Activated naive CD4-positive, alpha-beta T cell treated with anti-CD3 and anti-CD28 coated beads for 36 hours (primary cell): ENCODE measurements at regions of chr4 and their contacts with region 1.

Region 1: GRCh38 chr4:1752284-1753041 is 31.1 kb downstream of the TACC3 start:
- DNase-seq: peak; percentile 94
- H3K4me3 Mint-ChIP-seq: no peak overlapping the region
- H3K27ac Mint-ChIP-seq: no peak overlapping the region
- H3K4me1 Mint-ChIP-seq: peaks cover 6% of the 10 kb centered on the region
- H3K27me3 Mint-ChIP-seq: no peaks in the 10 kb centered on the region

Region 2: GRCh38 chr4:891747-892146 is 860.7 kb before region 1 on chr4:
- CTCF ChIA-PET with region 1: no interaction called
- intact Hi-C with region 1: no loop called
- DNase-seq: peak; percentile 29
- H3K4me3 Mint-ChIP-seq: no peak overlapping the region
- H3K27ac Mint-ChIP-seq: no peak overlapping the region
- H3K4me1 Mint-ChIP-seq: no peaks in the 10 kb centered on the region
- H3K27me3 Mint-ChIP-seq: no peaks in the 10 kb centered on the region

Region 3: DNA sequence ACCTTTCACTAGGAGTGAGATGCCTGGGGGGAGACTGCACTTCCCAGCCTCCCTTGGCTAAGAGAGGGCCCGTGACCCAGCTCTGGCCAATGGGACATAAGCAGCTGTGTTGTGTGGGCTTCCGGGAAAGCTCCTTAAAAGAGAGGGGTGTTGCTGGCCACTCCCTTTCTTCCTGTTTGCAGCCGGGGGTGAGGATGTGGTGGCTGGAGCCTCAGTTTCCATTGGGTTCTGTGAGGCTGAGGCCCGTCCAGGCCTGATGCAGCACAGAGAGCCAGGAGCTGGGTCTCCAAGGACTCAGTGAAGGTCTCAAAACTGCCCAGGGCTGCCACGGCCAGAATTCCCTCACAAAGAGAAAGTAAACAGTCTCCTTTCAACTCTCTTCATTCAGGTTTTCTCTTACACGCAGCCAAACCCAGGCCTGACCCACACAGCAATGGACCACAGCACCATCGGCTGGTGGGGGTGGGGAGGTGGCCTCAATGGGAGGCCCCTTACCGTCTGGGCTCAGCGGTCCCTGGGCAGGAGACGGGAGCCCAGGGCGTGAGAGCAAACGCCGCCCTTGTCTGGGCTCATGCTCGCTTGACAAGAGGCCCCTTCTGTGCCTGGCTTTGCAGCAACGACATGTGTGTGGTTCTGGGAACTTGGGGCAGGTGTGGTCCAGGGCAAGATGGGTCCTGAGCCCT is 352.8 kb before region 1 on chr4:
- CTCF ChIA-PET with region 1: no interaction called
- intact Hi-C with region 1: no loop called
- DNase-seq: no peak
- H3K4me3 Mint-ChIP-seq: no peak overlapping the region
- H3K27ac Mint-ChIP-seq: no peak overlapping the region
- H3K4me1 Mint-ChIP-seq: peaks cover 2% of the 10 kb centered on the region
- H3K27me3 Mint-ChIP-seq: peaks cover 20% of the 10 kb centered on the region

Region 4: GRCh38 chr4:1767770-1768366 is 15.4 kb after region 1 on chr4:
- CTCF ChIA-PET with region 1: interaction called, 11 read pairs
- intact Hi-C with region 1: loop called (anchors 1 kb)
- DNase-seq: peak; percentile 53
- H3K4me3 Mint-ChIP-seq: peak overlapping the region; percentile 24
- H3K27ac Mint-ChIP-seq: no peak overlapping the region
- H3K4me1 Mint-ChIP-seq: peaks cover 5% of the 10 kb centered on the region
- H3K27me3 Mint-ChIP-seq: peaks cover 13% of the 10 kb centered on the region

Region 5: DNA sequence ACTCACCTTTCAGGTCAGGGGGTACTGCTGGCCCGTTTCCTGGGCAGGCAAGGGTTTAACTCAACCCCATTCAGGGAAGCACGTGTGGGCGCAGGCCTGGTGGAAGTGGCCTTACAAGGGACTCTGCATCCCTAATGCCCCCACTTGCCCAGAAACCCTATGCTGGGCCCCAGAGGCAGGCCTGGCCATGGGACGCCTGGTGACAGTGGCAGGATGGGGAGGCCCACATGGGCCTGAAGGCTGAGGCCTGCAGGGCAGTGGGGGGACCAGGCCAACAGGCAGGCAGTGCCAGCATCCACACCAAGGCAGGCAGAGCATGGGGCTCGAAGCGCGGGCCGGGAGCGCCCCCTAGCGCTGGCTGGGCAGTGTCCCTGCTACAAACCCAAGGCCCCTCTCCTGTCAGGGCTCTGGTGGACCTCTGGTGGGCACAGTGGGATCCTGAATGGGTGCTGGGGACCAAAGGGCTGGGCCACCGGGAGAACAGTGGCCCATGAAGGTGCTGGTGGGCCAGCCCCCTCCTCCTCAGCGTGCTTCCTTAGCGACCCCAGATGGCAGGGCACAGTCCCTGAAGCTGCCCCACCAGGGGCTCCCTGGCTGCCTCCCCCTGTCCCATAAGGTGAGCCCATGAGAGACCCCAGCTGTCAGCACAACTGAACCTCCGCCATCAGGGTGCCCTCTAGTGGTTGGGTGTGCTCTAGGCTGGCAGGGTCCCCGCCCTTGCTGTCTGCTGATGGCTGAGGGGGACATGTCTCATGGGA is 57.5 kb after region 1 on chr4:
- CTCF ChIA-PET with region 1: interaction called, 55 read pairs
- intact Hi-C with region 1: loop called (anchors 1 kb)
- DNase-seq: peak; percentile 84
- H3K4me3 Mint-ChIP-seq: no peak overlapping the region
- H3K27ac Mint-ChIP-seq: no peak overlapping the region
- H3K4me1 Mint-ChIP-seq: no peaks in the 10 kb centered on the region
- H3K27me3 Mint-ChIP-seq: no peaks in the 10 kb centered on the region